ENCODE measurements at regions of chr4 and their contacts with region 1.

Region 1: DNA sequence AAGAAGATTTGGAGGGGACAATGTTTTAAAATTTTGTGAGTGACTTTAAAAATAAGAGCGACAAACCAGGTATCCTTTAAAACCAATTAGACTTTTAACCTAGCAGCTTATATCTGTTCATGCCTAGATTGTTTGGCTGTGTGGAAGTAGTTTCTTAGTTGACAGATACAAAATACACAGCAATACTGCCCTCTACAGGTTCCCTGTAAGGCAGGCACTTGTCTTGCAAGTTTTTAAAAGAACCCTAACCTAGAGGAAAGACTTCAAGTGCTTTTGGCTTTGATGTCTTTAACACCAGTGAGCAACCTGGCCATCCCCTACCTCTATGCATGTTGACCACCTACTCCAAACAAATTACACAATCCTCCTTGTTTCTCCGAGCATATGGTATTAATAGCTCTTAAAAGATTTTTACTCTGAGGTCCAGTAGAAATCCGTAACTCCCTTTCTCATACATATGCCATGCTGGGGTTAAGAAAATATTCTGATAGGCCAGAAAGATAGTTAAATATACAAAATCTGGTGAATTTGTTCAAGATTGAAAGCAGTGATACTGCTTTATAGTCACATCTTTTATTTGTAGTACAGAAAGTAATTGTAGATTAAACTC is 273.0 kb downstream of the ARHGAP24 start:
- DNase-seq: peak; percentile 92
- H3K4me3 ChIP-seq: no peak overlapping the region
- H3K27ac ChIP-seq: no peak overlapping the region
- H3K4me1 ChIP-seq: peaks cover 32% of the 10 kb centered on the region
- CTCF ChIP-seq: peak; percentile 98

Region 2: DNA sequence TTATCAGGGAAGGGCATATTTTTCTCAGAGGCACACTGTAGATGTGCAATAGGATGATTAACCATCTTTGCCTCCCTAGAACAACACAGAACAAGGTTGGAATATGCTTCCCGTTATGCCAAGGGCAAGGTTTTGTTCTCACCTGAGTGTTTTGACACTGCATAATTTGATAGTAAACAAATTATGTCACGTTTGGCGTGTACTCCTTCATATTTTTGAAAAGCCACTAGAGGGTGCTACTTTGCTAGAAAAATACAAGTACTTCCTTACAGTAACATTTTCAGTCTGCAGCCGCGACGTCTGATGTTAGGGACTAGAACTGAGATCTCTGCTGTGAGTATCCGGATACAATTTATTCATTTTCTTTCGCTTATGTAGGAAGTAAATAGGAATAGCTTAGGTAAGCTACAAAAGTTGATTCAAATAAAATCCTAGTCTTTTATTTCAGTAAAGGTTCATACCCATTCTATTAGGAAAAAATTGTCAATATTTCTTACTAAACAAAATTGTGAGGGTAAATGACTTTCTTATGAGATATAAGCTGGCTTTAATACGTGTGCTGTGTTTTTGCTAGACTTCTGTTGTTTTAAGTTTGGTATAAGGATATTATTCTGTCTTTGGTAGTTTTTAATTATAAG is 600.4 kb before region 1 on chr4:
- CTCF ChIA-PET with region 1: no interaction called
- POLR2A ChIA-PET with region 1: interaction called, 3 read pairs
- intact Hi-C with region 1: loop called (anchors 1 kb)
- DNase-seq: peak; percentile 61
- H3K4me3 ChIP-seq: no peak overlapping the region
- H3K27ac ChIP-seq: no peak overlapping the region
- H3K4me1 ChIP-seq: no peaks in the 10 kb centered on the region
- CTCF ChIP-seq: peak; percentile 82

Region 3: DNA sequence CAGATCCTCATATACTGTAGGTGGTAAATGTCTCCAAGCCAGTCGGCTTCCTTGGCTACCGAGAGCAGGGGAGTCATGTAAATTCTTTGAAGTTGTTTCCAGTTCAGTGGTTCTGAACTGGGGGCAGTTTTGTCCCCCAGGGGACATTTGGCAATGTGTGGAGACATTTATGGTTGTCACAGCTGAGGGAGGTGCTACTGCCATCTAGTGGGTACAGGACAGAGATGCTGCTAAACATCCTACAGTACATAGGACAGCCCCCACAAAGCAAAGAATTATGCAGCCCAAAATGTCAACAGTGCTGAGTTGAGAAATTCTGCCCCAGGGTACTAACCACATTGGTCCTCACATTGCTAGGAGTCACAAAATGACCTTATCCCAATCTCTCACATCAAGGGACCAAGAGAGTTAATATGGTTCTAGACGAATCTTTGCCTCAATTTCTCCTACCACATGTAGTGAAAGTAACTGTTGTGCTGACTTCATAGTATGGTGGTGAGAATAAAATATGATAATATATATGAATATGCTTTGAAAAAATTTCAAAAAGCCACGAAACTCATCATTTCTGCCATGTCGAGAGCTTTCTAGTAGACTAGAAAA is 377.5 kb before region 1 on chr4:
- CTCF ChIA-PET with region 1: no interaction called
- POLR2A ChIA-PET with region 1: no interaction called
- intact Hi-C with region 1: loop called (anchors 1 kb)
- DNase-seq: peak; percentile 64
- H3K4me3 ChIP-seq: no peak overlapping the region
- H3K27ac ChIP-seq: no peak overlapping the region
- H3K4me1 ChIP-seq: peaks cover 4% of the 10 kb centered on the region
- CTCF ChIP-seq: peak; percentile 92

Region 4: DNA sequence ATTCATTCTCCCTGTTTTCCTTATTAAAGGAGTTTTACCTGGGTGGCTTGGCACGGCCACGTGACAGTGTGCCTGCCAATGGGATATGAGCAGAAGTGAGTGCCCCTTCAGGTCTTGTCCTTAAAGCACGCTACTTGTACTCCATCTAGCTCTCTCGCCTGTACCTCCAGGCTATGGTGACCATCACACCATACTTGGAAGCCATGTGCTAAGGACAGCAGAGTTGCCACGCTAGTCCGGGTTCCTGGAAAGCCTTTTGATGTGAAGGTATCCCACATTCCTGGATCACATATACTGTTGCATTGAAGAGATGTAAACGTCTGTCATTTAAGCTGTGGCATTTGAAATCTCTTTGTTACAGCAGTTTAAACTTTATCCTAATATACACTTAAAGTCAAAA is 304.4 kb before region 1 on chr4:
- CTCF ChIA-PET with region 1: no interaction called
- POLR2A ChIA-PET with region 1: interaction called, 3 read pairs
- intact Hi-C with region 1: loop called (anchors 5 kb)
- DNase-seq: no peak
- H3K4me3 ChIP-seq: no peak overlapping the region
- H3K27ac ChIP-seq: no peak overlapping the region
- H3K4me1 ChIP-seq: peaks cover 2% of the 10 kb centered on the region
- CTCF ChIP-seq: no peak

Region 5: GRCh38 chr4:85543832-85544231 is 204.2 kb before region 1 on chr4:
- CTCF ChIA-PET with region 1: no interaction called
- POLR2A ChIA-PET with region 1: no interaction called
- intact Hi-C with region 1: loop called (anchors 5 kb)
- DNase-seq: no peak
- H3K4me3 ChIP-seq: no peak overlapping the region
- H3K27ac ChIP-seq: no peak overlapping the region
- H3K4me1 ChIP-seq: no peaks in the 10 kb centered on the region
- CTCF ChIP-seq: no peak

Region 6: GRCh38 chr4:85658766-85659439 is 89.1 kb before region 1 on chr4:
- CTCF ChIA-PET with region 1: interaction called, 3 read pairs
- POLR2A ChIA-PET with region 1: interaction called, 12 read pairs
- intact Hi-C with region 1: loop called (anchors 1 kb)
- DNase-seq: peak; percentile 67
- H3K4me3 ChIP-seq: no peak overlapping the region
- H3K27ac ChIP-seq: peak overlapping the region; percentile 94
- H3K4me1 ChIP-seq: peaks cover 42% of the 10 kb centered on the region
- CTCF ChIP-seq: peak; percentile 82

Region 7: GRCh38 chr4:85807247-85807950 is 59.4 kb after region 1 on chr4:
- CTCF ChIA-PET with region 1: no interaction called
- POLR2A ChIA-PET with region 1: no interaction called
- intact Hi-C with region 1: no loop called
- DNase-seq: no peak
- H3K4me3 ChIP-seq: no peak overlapping the region
- H3K27ac ChIP-seq: no peak overlapping the region
- H3K4me1 ChIP-seq: no peaks in the 10 kb centered on the region
- CTCF ChIP-seq: no peak

Region 8: DNA sequence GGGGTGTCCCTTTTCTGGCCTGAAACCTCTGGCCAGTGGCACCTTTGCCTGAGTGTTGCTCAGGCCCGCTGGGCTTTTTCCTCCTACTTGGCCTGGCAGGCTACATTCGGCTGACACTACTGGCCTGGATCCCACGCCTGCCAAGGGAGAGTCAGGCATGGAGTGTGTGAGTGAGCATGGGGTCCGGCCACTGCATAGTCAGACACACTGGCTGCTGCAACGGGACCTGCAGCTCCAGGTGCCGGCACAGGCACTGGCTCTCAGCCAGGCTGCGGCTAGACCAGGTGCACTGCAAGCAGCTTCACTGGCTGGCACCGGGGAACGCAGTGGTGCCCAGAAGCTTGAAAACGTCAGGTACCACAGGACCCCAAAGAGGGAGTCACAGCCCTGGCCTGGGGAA is 161.9 kb after region 1 on chr4:
- CTCF ChIA-PET with region 1: no interaction called
- POLR2A ChIA-PET with region 1: no interaction called
- intact Hi-C with region 1: no loop called
- DNase-seq: no peak
- H3K4me3 ChIP-seq: no peak overlapping the region
- H3K27ac ChIP-seq: no peak overlapping the region
- H3K4me1 ChIP-seq: no peaks in the 10 kb centered on the region
- CTCF ChIP-seq: no peak

Region 9: DNA sequence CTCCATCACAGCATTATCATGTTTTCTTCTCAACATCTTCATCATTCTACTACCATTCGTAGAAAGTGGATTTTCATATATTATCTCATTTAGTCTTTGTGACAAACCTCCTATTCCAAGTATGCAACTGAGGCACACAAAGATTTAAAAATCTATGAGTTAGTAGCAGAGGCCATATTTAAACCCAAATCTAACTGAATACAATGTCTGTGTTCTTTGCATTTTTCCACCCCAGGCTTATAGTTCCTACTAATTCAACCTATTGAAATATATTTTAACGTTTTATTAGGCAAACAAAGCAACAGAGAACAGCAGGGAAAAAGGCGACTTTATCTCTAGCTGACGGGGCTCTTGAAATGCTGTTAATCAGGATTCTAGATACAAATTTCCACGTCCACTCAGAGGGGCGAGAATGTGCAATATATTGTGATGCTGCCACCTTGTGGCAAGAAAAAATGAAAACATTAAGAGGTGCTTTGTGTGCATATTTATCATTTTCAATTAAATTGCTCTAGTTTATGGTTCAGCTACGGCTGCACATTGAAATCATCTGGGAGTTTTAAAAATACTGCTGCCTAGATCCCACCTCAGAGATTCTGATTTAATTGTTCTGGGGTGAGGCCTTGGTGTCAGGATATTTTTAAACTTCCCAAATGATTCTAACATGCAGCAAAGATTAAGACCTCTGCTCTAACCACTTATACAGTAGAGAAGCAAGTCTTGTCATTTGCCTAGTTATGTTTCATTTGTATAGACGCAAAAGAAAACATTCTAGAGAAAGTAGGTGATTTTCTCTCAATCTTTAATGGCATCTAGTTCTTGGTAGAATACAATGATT is 296.0 kb after region 1 on chr4:
- CTCF ChIA-PET with region 1: no interaction called
- POLR2A ChIA-PET with region 1: no interaction called
- intact Hi-C with region 1: loop called (anchors 5 kb)
- DNase-seq: peak; percentile 57
- H3K4me3 ChIP-seq: no peak overlapping the region
- H3K27ac ChIP-seq: no peak overlapping the region
- H3K4me1 ChIP-seq: no peaks in the 10 kb centered on the region
- CTCF ChIP-seq: peak; percentile 89

Region 10: DNA sequence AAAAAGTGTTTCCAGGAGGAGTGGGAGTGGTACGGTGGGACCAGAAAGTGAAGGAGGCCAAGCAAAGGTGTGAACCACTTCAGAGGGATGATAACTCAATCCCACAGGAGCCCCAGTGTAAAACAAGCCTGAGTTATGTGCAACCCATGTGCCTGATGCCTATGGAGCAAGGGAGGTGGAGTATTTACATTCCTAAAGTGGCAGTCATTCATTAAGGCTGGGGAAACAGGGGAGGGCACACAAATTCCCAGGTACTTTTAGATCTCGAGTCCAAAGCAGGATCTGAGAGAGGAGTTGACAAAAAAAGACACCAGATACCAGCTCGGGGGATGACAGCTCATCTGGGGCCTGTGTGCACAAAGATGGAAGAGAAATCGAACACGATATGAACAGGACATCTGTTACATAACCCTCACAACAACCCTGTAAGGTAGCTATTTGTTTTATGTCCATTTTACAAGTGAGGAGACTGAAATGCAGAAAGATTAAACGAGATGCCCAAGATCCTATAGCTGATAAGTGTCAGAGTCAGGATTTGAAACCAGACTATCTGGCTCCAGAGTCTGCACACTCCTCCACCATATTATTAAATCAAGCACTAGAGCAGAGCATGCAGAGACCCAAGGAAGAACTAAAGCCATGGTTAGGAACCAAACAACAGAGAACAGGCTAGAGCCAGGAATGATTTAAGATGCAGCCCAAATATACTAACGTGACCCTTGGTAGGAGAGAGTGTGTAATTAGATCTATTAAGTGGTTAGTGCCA is 703.8 kb after region 1 on chr4:
- CTCF ChIA-PET with region 1: no interaction called
- POLR2A ChIA-PET with region 1: no interaction called
- intact Hi-C with region 1: no loop called
- DNase-seq: no peak
- H3K4me3 ChIP-seq: no peak overlapping the region
- H3K27ac ChIP-seq: no peak overlapping the region
- H3K4me1 ChIP-seq: no peaks in the 10 kb centered on the region
- CTCF ChIP-seq: no peak